Common myeloid progenitor, CD34-positive (primary cell): ENCODE measurements at regions of chr20 and their contacts with region 1.

Region 1: GRCh38 chr20:5569021-5569420 is 181.2 kb upstream of the SHLD1 start:
- DNase-seq: peak; percentile 63 to 82 (median 74)
- H3K4me3 ChIP-seq: no peak overlapping the region
- H3K27ac ChIP-seq: no peak overlapping the region
- H3K4me1 ChIP-seq: no peaks in the 10 kb centered on the region
- H3K27me3 ChIP-seq: no peaks in the 10 kb centered on the region

Region 2: GRCh38 chr20:5522422-5522821 is 46.6 kb before region 1 on chr20:
- CTCF ChIA-PET with region 1: no interaction called
- POLR2A ChIA-PET with region 1: no interaction called
- DNase-seq: no peak
- H3K4me3 ChIP-seq: no peak overlapping the region
- H3K27ac ChIP-seq: no peak overlapping the region
- H3K4me1 ChIP-seq: peaks cover 0 to 3% (median 0%) of the 10 kb centered on the region in 4 experiments
- H3K27me3 ChIP-seq: no peaks in the 10 kb centered on the region

Region 3: DNA sequence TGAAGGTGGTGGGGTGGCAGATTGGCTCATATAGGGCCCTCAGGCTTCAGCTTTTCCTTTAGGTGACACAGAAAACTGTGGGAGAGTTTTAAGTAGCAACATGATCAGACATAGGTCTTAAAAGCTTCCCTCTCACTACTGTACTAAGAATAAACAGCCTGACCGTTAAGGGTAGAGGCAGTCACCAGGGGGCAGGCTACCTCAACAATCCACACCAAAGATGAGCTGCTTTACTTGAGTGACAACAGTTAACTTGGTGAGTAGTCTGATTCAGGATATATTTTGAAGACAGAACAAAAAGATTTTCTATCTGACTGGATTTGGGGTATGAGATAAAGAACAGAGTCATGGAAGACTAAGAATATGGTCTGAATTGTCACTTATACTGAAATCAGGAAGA is 11.9 kb before region 1 on chr20:
- CTCF ChIA-PET with region 1: interaction called, 23 read pairs
- POLR2A ChIA-PET with region 1: no interaction called
- DNase-seq: peak; percentile 50 to 75 (median 68)
- H3K4me3 ChIP-seq: no peak overlapping the region
- H3K27ac ChIP-seq: no peak overlapping the region
- H3K4me1 ChIP-seq: no peaks in the 10 kb centered on the region
- H3K27me3 ChIP-seq: no peaks in the 10 kb centered on the region

Region 4: GRCh38 chr20:5580936-5581708 is 12.1 kb after region 1 on chr20:
- CTCF ChIA-PET with region 1: interaction called, 10 read pairs
- POLR2A ChIA-PET with region 1: no interaction called
- DNase-seq: no peak
- H3K4me3 ChIP-seq: no peak overlapping the region
- H3K27ac ChIP-seq: no peak overlapping the region
- H3K4me1 ChIP-seq: no peaks in the 10 kb centered on the region
- H3K27me3 ChIP-seq: no peaks in the 10 kb centered on the region

Region 5: DNA sequence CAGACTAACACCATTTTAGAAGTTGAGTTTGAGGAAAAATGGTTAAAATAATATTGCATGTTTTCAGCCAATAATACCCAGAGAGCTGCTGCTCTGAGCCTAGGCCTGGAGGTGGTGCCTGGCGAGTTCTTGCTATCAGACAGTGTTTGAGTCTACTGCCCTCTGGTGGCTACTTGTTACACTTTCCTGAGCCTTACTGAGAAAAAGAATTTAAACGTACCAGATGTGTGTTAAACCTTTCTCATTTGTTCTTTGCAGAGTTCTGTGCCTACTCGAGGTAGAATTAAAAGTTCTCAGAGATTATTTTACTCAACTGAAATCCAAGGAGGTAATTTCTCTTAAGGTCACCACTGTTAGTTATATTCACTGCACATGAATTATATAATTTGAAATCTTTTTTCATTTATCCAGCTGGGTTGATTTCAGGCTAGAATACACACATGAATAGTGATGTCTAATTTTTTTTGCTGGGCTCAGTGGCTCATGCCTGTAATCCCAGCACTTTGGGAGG is 219.4 kb after region 1 on chr20:
- CTCF ChIA-PET with region 1: interaction called, 112 read pairs
- POLR2A ChIA-PET with region 1: interaction called, 3 read pairs
- DNase-seq: peak; percentile 89 to 95 (median 92)
- H3K4me3 ChIP-seq: no peak overlapping the region
- H3K27ac ChIP-seq: no peak overlapping the region
- H3K4me1 ChIP-seq: peaks cover 0 to 7% (median 0%) of the 10 kb centered on the region in 4 experiments
- H3K27me3 ChIP-seq: no peaks in the 10 kb centered on the region